Activated CD4-positive, alpha-beta memory T cell treated with anti-CD3 and anti-CD28 coated beads for 36 hours (primary cell): ENCODE measurements at regions of chr6 and their contacts with region 1.

Region 1: GRCh38 chr6:15245361-15246216 is at the start of gene JARID2:
- DNase-seq: peak; percentile 98
- H3K4me3 Mint-ChIP-seq: peak within 1 kb of the TSS; percentile 100
- H3K27ac Mint-ChIP-seq: peak within 1 kb of the TSS; percentile 94
- H3K4me1 Mint-ChIP-seq: peaks cover 18% of the 10 kb centered on the region
- H3K27me3 Mint-ChIP-seq: peaks cover 1% of the 10 kb centered on the region
- total RNA-seq, gene JARID2: 41.4 to 44.0 TPM

Region 2: DNA sequence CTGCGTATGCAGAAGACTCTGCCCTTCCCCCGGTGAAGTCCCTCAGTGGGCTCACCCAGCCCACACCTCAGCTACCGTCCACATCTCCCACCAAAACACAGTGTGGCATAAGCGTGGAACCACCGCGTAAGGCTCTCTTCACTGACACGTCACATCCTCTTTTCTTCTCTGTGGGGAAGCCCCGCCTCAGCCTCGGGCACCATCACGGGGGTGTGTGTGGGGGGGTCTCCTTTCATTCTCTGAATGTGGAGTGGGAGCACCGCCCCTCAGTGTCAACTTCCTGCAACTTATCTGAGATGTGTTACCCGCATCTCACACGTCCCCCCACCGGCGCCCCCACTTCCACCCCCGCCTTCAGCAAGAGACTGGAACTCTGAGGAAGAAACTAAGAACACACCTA is 388.1 kb before region 1 on chr6:
- CTCF ChIA-PET with region 1: no interaction called
- POLR2A ChIA-PET with region 1: interaction called, 7 read pairs
- intact Hi-C with region 1: loop called (anchors 5 kb)
- DNase-seq: peak; percentile 84
- H3K4me3 Mint-ChIP-seq: peak overlapping the region; percentile 56
- H3K27ac Mint-ChIP-seq: peak overlapping the region; percentile 95
- H3K4me1 Mint-ChIP-seq: peaks cover 48% of the 10 kb centered on the region
- H3K27me3 Mint-ChIP-seq: no peaks in the 10 kb centered on the region

Region 3: GRCh38 chr6:15023448-15023847 is 222.1 kb before region 1 on chr6:
- CTCF ChIA-PET with region 1: interaction called, 4 read pairs
- POLR2A ChIA-PET with region 1: interaction called, 3 read pairs
- intact Hi-C with region 1: loop called (anchors 1 kb)
- DNase-seq: peak; percentile 89
- H3K4me3 Mint-ChIP-seq: peak overlapping the region; percentile 41
- H3K27ac Mint-ChIP-seq: peak overlapping the region; percentile 96
- H3K4me1 Mint-ChIP-seq: peaks cover 35% of the 10 kb centered on the region
- H3K27me3 Mint-ChIP-seq: peaks cover 3% of the 10 kb centered on the region

Region 4: DNA sequence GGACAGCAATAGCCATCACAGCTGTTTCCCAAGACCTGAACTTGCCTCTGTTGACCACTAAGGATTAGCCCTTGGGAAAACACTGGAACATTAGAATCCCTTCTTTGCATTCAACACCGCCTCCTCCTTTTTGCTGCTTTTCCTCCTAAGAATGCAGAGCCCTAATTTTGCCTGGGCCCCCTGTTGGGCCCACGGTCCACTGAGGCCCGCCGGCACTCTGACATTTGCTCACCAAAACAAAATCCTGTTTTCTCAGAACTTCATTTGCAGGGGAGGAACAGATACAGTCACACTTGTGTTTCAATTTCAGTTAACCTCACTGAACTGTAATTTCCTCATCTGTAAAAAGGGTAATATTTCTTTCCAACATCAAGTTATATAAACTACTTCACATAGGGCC is 115.7 kb before region 1 on chr6:
- CTCF ChIA-PET with region 1: no interaction called
- POLR2A ChIA-PET with region 1: no interaction called
- intact Hi-C with region 1: loop called (anchors 1 kb)
- DNase-seq: peak; percentile 42
- H3K4me3 Mint-ChIP-seq: no peak overlapping the region
- H3K27ac Mint-ChIP-seq: peak overlapping the region; percentile 54
- H3K4me1 Mint-ChIP-seq: peaks cover 33% of the 10 kb centered on the region
- H3K27me3 Mint-ChIP-seq: no peaks in the 10 kb centered on the region

Region 5: DNA sequence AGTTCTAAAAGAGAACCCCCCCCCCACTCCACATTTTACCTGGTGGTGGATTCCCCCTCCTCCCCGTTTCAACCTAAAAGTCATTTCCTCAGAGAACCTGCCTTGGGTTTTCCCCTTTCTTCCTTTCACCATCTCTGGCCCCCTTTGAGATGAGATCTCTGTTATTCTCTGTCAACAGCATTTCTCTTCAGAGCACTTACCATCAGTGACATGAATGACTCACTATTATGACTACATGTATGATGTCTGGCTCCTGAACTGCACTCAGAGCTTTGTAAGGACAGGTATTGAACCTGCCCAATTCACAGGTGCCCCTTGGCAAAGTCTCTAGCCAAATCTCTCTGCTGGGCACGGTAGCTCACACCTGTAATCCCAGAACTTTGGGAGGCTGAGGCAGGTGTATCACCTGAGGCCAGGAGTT is 61.1 kb before region 1 on chr6:
- CTCF ChIA-PET with region 1: no interaction called
- POLR2A ChIA-PET with region 1: no interaction called
- intact Hi-C with region 1: loop called (anchors 1 kb)
- DNase-seq: peak; percentile 58
- H3K4me3 Mint-ChIP-seq: peak overlapping the region; percentile 37
- H3K27ac Mint-ChIP-seq: peak overlapping the region; percentile 95
- H3K4me1 Mint-ChIP-seq: peaks cover 20% of the 10 kb centered on the region
- H3K27me3 Mint-ChIP-seq: no peaks in the 10 kb centered on the region

Region 6: DNA sequence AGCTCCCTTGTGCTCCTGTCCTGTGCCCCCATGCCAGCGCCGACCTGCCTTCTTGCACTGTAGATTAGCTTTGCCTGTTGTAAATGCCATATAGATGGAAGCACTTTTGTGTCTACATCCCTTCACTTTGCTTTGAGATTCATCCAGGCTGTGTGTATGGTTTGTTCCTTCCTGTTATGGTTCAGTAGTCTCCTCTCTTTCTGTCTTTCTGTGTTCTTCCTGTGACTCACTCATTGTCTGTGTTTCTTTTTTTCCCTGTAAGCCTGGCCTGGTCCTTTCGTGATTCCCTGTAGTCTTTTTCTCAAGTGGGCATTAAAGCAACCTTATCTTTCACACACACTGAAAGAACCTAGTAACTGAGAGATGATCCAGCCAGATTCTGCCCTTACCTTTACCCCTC is 66.9 kb after region 1 on chr6:
- CTCF ChIA-PET with region 1: no interaction called
- POLR2A ChIA-PET with region 1: no interaction called
- intact Hi-C with region 1: no loop called
- DNase-seq: no peak
- H3K4me3 Mint-ChIP-seq: no peak overlapping the region
- H3K27ac Mint-ChIP-seq: peak overlapping the region; percentile 16
- H3K4me1 Mint-ChIP-seq: peaks cover 90% of the 10 kb centered on the region
- H3K27me3 Mint-ChIP-seq: no peaks in the 10 kb centered on the region

Region 7: GRCh38 chr6:15441215-15441868 is 195.8 kb after region 1 on chr6:
- CTCF ChIA-PET with region 1: no interaction called
- POLR2A ChIA-PET with region 1: no interaction called
- intact Hi-C with region 1: loop called (anchors 2 kb)
- DNase-seq: peak; percentile 36
- H3K4me3 Mint-ChIP-seq: no peak overlapping the region
- H3K27ac Mint-ChIP-seq: no peak overlapping the region
- H3K4me1 Mint-ChIP-seq: peaks cover 62% of the 10 kb centered on the region
- H3K27me3 Mint-ChIP-seq: no peaks in the 10 kb centered on the region